ENCODE measurements at regions of chr1 and their contacts with region 1.

Region 1: GRCh38 chr1:165367375-165367993 is 11.0 kb upstream of the LMX1A start:
- DNase-seq: peak; percentile 89
- H3K4me3 Mint-ChIP-seq: no peak overlapping the region
- H3K27ac Mint-ChIP-seq: no peak overlapping the region
- H3K4me1 Mint-ChIP-seq: peaks cover 23% of the 10 kb centered on the region
- H3K27me3 Mint-ChIP-seq: peaks cover 38% of the 10 kb centered on the region
- CTCF ChIP-seq: peak; percentile 99

Region 2: GRCh38 chr1:164754088-164754600 is 613.3 kb before region 1 on chr1:
- CTCF ChIA-PET with region 1: no interaction called
- POLR2A ChIA-PET with region 1: no interaction called
- intact Hi-C with region 1: no loop called
- DNase-seq: no peak
- H3K4me3 Mint-ChIP-seq: no peak overlapping the region
- H3K27ac Mint-ChIP-seq: no peak overlapping the region
- H3K4me1 Mint-ChIP-seq: peaks cover 8% of the 10 kb centered on the region
- H3K27me3 Mint-ChIP-seq: no peaks in the 10 kb centered on the region
- CTCF ChIP-seq: no peak

Region 3: GRCh38 chr1:165152727-165153126 is 214.8 kb before region 1 on chr1:
- CTCF ChIA-PET with region 1: interaction called, 334 read pairs
- POLR2A ChIA-PET with region 1: no interaction called
- intact Hi-C with region 1: no loop called
- DNase-seq: peak; percentile 60
- H3K4me3 Mint-ChIP-seq: no peak overlapping the region
- H3K27ac Mint-ChIP-seq: no peak overlapping the region
- H3K4me1 Mint-ChIP-seq: no peaks in the 10 kb centered on the region
- H3K27me3 Mint-ChIP-seq: peaks cover 45% of the 10 kb centered on the region
- CTCF ChIP-seq: no peak

Region 4: DNA sequence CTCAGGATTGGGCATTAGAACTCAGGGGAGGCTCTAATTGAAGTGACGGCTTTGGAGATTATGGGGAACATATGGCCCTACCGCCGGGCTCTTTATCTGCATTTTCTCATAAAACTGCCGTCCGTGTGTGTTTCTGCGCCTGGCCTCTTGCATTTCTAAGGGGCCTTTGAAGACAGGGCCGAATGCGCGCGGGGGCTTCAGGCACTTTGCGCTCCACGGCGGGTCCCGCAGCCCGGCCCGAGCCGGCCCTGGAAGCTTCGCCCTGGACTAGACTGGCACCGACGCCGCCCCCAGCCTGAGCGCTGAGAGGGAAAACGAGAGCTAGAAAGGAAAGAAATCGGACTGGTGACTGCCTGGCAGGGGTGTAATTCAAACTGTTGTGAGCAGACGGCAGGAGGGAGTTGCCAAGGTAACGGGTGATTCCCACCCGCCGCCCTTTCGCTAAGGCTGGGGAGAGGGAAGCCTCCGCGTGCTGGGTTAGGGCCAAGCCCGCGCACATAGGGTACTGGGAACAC is 131.7 kb before region 1 on chr1:
- CTCF ChIA-PET with region 1: interaction called, 12 read pairs
- POLR2A ChIA-PET with region 1: no interaction called
- intact Hi-C with region 1: no loop called
- DNase-seq: no peak
- H3K4me3 Mint-ChIP-seq: no peak overlapping the region
- H3K27ac Mint-ChIP-seq: no peak overlapping the region
- H3K4me1 Mint-ChIP-seq: no peaks in the 10 kb centered on the region
- H3K27me3 Mint-ChIP-seq: peaks cover 68% of the 10 kb centered on the region
- CTCF ChIP-seq: no peak

Region 5: GRCh38 chr1:165279882-165280281 is 87.6 kb before region 1 on chr1:
- CTCF ChIA-PET with region 1: interaction called, 34 read pairs
- POLR2A ChIA-PET with region 1: no interaction called
- intact Hi-C with region 1: no loop called
- DNase-seq: no peak
- H3K4me3 Mint-ChIP-seq: no peak overlapping the region
- H3K27ac Mint-ChIP-seq: no peak overlapping the region
- H3K4me1 Mint-ChIP-seq: no peaks in the 10 kb centered on the region
- H3K27me3 Mint-ChIP-seq: peaks cover 64% of the 10 kb centered on the region
- CTCF ChIP-seq: no peak

Region 6: GRCh38 chr1:165317612-165318011 is 49.9 kb before region 1 on chr1:
- CTCF ChIA-PET with region 1: interaction called, 52 read pairs
- POLR2A ChIA-PET with region 1: no interaction called
- intact Hi-C with region 1: no loop called
- DNase-seq: no peak
- H3K4me3 Mint-ChIP-seq: no peak overlapping the region
- H3K27ac Mint-ChIP-seq: no peak overlapping the region
- H3K4me1 Mint-ChIP-seq: no peaks in the 10 kb centered on the region
- H3K27me3 Mint-ChIP-seq: peaks cover 68% of the 10 kb centered on the region
- CTCF ChIP-seq: no peak

Region 7: DNA sequence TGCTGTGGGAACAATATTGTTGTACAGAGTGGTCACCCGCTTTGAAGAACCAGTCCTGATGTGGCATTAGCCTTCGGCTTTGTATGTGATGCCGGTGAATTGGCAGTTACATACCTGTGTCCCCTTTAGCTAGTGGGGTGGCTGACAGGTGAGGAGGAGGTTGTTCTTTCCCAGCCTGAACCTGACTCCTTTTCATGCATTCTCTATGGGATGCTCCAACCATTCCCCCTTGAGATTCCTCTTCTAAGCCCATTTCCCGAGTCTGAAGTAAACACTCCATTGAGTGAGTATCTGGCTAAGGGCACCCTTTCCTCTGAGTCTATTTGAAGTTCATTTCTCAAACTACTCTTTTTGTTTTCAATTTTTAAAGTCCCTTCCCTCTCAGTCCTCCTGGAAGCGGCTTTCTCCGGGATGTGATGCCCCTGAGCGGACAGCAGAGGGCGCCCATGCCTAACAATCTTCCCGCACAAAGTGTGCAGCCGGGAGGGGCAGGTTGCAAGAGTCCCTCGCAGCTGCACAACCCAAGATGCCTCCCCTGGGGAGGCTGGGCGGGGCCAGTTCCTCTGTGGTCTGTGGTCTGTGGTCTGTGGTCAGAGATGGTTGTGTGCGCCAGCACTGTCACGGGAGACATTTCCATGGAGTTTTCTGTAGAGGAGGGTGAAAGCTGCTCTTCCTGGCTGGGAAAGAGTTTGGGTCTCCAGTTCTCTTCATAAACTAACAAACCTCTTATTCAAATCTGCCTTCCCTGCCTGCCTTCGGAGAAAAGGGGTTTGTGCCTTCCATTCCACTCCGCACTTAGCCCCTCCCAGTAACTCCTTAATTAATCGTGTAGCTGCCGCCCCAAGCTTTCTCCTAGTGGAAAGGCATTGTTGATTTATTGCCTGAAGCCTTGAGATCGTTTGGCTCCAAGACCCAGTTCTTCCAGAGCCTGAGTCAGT is 25.4 kb after region 1 on chr1:
- CTCF ChIA-PET with region 1: interaction called, 212 read pairs
- POLR2A ChIA-PET with region 1: no interaction called
- intact Hi-C with region 1: no loop called
- DNase-seq: peak; percentile 88
- H3K4me3 Mint-ChIP-seq: peak overlapping the region; percentile 47
- H3K27ac Mint-ChIP-seq: no peak overlapping the region
- H3K4me1 Mint-ChIP-seq: peaks cover 18% of the 10 kb centered on the region
- H3K27me3 Mint-ChIP-seq: peaks cover 83% of the 10 kb centered on the region
- CTCF ChIP-seq: peak; percentile 98

Region 8: DNA sequence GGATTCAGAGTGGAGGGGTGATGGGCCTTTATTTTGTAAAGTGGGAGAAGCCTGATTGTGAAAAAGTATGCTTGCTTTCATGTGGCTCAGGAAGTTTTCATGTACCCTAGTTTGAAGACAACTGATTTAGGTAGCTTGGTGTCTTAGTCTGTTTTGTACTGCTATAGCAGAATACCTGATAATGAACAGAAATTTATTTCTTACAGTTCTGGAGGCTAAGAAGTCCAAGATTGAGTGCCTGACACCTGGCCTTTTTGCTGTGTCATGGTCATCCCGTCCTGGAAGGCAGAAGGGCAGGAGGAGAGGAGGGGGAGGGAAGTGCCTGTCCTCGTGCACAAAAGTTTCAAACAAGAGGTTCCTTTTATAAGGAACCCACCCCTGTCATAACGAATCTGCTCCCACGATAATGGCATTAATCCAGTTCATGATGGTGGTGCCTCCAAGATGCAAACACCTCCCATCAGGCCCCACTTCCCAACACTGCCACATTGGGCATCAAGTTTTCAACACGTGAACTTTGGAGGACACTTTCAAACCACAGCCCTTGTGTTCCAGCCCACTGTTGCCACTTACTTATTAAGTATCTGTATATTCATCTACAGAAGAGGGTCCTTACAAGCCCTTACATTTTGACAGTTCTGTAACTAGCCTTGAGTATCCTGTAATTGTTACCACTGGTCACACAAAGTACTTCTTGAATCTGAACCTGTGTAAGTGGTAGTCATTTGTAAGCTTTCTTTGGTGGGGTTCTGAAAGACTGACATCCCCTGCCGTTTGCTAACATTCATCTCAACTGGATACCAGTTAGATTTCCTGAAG is 469.4 kb after region 1 on chr1:
- CTCF ChIA-PET with region 1: no interaction called
- POLR2A ChIA-PET with region 1: no interaction called
- intact Hi-C with region 1: no loop called
- DNase-seq: no peak
- H3K4me3 Mint-ChIP-seq: no peak overlapping the region
- H3K27ac Mint-ChIP-seq: no peak overlapping the region
- H3K4me1 Mint-ChIP-seq: peaks cover 48% of the 10 kb centered on the region
- H3K27me3 Mint-ChIP-seq: no peaks in the 10 kb centered on the region
- CTCF ChIP-seq: no peak

Measured in MCF 10A (cell line).